Activated CD4-positive, alpha-beta T cell treated with anti-CD3 and anti-CD28 coated beads, Interleukin-2, amount 10 ng/mL, durations not matched to agents 24 days and 14 days (primary cell): ENCODE measurements at regions of chr1 and their contacts with region 1.

Region 1: DNA sequence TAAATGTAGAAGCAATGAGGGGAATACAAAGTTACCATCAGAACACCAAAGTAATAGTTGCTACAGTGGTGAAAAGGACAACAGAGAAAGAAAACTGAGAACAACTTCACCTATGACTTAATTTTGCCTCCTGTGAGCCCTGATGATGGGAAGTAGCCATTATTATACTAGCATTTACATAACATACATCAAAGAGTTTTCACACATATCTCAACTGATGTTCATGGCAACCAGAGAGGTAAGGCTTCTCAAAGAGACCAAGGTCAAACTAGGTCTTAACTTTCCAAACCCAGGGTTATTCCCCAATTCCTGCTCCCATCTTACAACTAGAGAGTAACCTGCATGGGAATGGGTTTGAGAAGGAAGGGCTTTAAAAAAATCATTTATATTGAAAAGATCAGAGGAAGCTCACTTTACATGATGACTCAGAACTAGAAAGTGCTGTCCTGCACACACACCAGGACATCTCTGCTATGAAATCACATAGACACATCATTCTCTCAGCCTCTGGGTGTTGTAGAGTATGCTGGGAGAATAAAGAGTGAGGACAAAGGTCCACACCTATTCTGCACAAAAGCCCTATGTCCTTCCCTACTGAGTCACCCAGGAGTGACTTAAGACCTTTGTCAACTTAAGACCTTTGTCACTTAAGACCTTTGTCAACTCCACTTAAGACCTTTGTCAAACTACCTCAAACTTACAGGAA is 179.7 kb downstream of the TNFSF18 start:
- DNase-seq: peak; percentile 67
- H3K4me3 Mint-ChIP-seq: no peak overlapping the region
- H3K27ac Mint-ChIP-seq: no peak overlapping the region
- H3K4me1 Mint-ChIP-seq: peaks cover 33% of the 10 kb centered on the region
- H3K27me3 Mint-ChIP-seq: peaks cover 39% of the 10 kb centered on the region

Region 2: GRCh38 chr1:172845371-172845770 is 25.7 kb before region 1 on chr1:
- intact Hi-C with region 1: loop called (anchors 1 kb)
- DNase-seq: peak; percentile 84
- H3K4me3 Mint-ChIP-seq: peak overlapping the region; percentile 11
- H3K27ac Mint-ChIP-seq: peak overlapping the region; percentile 38
- H3K4me1 Mint-ChIP-seq: peaks cover 24% of the 10 kb centered on the region
- H3K27me3 Mint-ChIP-seq: peaks cover 41% of the 10 kb centered on the region

Region 3: GRCh38 chr1:172883107-172883791 is 12.2 kb after region 1 on chr1:
- intact Hi-C with region 1: loop called (anchors 2 kb)
- DNase-seq: peak; percentile 58
- H3K4me3 Mint-ChIP-seq: peak overlapping the region; percentile 26
- H3K27ac Mint-ChIP-seq: peak overlapping the region; percentile 43
- H3K4me1 Mint-ChIP-seq: peaks cover 15% of the 10 kb centered on the region
- H3K27me3 Mint-ChIP-seq: peaks cover 71% of the 10 kb centered on the region

Region 4: GRCh38 chr1:172966844-172967540 is 95.9 kb after region 1 on chr1:
- intact Hi-C with region 1: loop called (anchors 1 kb)
- DNase-seq: no peak
- H3K4me3 Mint-ChIP-seq: no peak overlapping the region
- H3K27ac Mint-ChIP-seq: no peak overlapping the region
- H3K4me1 Mint-ChIP-seq: peaks cover 8% of the 10 kb centered on the region
- H3K27me3 Mint-ChIP-seq: peaks cover 28% of the 10 kb centered on the region